Astrocyte of the cerebellum (primary cell): ENCODE measurements at regions of chr10 and their contacts with region 1.

Region 1: GRCh38 chr10:59479426-59479825 is 117.1 kb upstream of the FAM13C start:
- DNase-seq: no peak
- H3K4me3 ChIP-seq: no peak overlapping the region
- CTCF ChIP-seq: no peak

Region 2: DNA sequence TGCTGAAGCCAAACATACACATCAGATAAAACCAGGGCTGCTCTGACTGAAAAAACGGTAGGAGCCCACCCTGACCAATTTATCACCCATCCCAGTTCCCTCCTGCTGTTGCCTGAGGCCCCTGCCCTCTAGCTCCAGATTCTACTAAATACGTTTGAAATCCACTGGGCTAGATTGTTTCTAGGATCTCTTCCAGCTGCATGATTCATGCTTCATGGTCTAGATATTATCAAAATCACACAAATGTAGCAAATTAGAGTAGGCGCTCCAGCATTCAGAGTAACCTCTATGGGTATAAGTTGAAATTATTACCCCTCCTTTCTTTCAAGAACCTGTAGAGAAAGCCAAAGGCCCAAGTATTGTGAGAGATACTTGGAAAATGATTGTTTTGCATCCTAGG is 34.1 kb after region 1 on chr10:
- in situ Hi-C with region 1: loop called (anchors 5 kb)
- DNase-seq: peak; percentile 36
- H3K4me3 ChIP-seq: no peak overlapping the region
- CTCF ChIP-seq: no peak

Region 3: DNA sequence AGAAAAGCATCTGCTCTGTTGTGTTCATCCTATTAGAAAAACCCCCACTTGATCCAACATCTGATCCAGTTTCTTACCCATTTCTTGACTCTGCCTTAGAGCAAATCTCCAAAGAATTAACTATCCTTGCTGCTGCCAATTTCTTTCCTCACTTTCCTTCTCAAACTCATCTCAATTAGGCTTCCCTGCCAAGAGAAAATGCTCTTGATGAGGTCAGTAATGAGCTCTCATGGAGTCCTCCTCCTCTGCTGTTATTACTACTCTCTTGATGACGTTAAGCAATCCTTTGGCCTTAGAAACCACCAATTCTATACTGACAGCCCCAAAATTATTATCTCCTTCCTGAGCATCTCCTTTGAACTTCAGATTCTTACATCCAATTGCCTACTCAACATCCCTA is 44.9 kb after region 1 on chr10:
- in situ Hi-C with region 1: no loop called
- DNase-seq: no peak
- H3K4me3 ChIP-seq: no peak overlapping the region
- CTCF ChIP-seq: no peak

Region 4: DNA sequence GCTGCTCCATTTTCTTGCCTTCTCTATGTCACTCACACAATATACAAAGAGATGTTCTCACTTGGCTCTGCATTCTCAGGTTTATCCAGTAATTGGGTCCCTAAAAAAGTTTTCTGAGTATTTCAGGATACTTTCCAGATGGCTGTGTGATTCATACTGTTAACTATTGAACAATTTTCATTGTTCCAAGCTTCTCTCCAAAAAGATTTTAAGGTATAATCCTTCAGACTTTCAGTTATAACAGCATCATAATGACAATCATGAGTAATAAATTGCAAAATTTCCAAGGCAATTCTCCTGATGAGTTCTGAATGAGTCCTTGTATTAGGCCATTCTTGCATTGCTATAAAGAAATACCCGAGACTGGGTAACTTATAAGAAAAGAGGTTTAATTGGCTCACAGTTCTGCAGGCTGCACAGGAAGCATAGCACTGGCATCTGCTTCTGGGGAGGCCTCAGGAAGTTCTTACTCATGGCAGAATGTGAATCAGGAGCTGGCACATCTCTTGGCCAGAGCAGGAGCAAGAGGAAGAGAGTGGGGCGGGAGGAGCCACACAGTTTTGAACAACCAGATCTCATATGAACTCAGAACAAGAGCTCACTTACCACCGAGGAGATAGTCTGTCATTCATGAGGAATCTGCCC is 82.2 kb after region 1 on chr10:
- in situ Hi-C with region 1: loop called (anchors 5 kb)
- DNase-seq: no peak
- H3K4me3 ChIP-seq: no peak overlapping the region
- CTCF ChIP-seq: no peak